ENCODE measurements at regions of chr2 and their contacts with region 1.

Region 1: GRCh38 chr2:127324635-127325034 is 30.7 kb upstream of the ERCC3 start:
- DNase-seq: no peak
- H3K4me3 Mint-ChIP-seq: no peak overlapping the region
- H3K27ac Mint-ChIP-seq: no peak overlapping the region
- H3K4me1 Mint-ChIP-seq: peaks cover 7% of the 10 kb centered on the region
- H3K27me3 Mint-ChIP-seq: no peaks in the 10 kb centered on the region

Region 2: DNA sequence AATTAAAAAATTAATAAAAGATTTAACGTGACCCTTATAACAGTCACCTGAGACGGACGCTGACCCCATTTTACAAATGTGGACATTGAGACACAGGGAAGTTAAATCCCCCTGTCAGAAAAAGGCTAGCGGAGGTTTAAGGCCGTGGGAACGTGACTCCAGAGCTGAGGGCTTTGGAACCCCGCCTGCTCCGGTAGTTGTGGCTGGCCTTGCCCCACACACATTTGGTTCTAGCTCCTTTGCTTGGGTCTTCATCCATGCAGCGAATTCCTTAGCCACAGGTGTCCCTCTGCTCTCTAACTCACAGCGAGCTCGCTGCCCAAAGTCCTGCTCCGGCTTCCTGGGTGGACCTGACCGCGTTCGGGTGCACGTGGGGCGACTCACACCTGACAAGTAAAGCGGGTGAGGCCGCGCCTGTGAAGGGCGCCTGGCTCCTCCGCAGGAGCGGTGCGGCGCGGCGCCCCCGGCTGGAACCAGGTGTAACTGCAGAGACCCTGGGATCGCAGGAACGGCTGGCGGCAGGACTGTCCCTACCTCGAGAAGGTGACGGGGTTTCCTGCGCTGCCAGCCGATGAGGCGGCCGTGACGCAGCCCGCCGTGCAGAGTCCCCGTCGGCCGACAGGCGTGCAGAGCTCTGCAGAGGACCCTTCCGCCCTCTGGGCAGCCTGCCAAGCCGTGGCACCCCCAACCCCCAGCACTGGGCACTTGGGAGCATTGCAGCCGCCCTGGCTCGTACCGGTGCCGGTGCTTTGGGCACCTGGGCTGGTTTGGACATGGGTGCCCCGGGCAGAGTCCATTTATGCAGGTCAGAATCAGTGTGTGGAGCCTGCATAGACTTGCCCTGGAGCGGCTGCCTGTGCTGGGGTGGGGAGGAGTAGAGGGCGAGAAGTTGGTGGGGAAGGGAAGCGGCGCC is 91.2 kb after region 1 on chr2:
- intact Hi-C with region 1: loop called (anchors 1 kb)
- DNase-seq: peak; percentile 67
- H3K4me3 Mint-ChIP-seq: peak overlapping the region; percentile 71
- H3K27ac Mint-ChIP-seq: peak overlapping the region; percentile 29
- H3K4me1 Mint-ChIP-seq: peaks cover 51% of the 10 kb centered on the region
- H3K27me3 Mint-ChIP-seq: peaks cover 14% of the 10 kb centered on the region